ENCODE measurements at regions of chr18 and their contacts with region 1.

Region 1: GRCh38 chr18:21955757-21956652 is 213.4 kb upstream of the GATA6 start:
- DNase-seq: peak; percentile 82
- H3K4me3 Mint-ChIP-seq: no peak overlapping the region
- H3K27ac Mint-ChIP-seq: no peak overlapping the region
- H3K4me1 Mint-ChIP-seq: no peaks in the 10 kb centered on the region
- H3K27me3 Mint-ChIP-seq: peaks cover 23% of the 10 kb centered on the region

Region 2: DNA sequence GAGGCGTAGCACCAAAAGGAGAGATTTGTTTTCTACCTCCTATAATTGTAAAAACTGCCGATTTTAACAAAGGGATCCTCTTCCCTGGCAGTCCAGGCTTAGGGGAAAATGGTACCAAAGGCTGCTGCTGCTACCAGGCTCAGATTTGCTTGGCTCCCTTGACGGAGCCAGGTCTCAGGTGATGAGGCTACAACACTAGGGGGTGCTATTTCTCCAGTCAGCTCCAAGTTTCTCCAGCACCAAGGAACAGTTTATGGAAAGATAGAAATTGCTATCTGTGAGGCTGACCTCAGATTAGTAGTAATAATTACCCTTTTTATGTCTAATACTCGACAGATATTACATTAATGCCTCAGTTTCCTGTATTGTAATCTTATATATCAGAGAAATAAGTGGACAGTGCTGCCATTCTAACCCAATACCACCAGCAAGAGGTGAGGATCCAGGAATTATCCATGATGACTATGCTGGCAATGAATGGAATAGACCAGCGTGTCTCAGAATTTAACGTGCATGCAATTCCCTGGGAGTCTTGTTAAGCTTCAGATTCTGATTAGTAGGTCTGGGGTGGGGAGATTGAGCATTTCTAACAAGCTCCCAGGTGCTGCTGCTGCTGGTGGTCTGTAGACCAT is 466.8 kb before region 1 on chr18:
- CTCF ChIA-PET with region 1: interaction called, 10 read pairs
- POLR2A ChIA-PET with region 1: no interaction called
- intact Hi-C with region 1: loop called (anchors 2 kb)
- DNase-seq: peak; percentile 41
- H3K4me3 Mint-ChIP-seq: no peak overlapping the region
- H3K27ac Mint-ChIP-seq: no peak overlapping the region
- H3K4me1 Mint-ChIP-seq: no peaks in the 10 kb centered on the region
- H3K27me3 Mint-ChIP-seq: peaks cover 2% of the 10 kb centered on the region

Region 3: GRCh38 chr18:21897811-21898210 is 58.2 kb before region 1 on chr18:
- CTCF ChIA-PET with region 1: interaction called, 5 read pairs
- POLR2A ChIA-PET with region 1: no interaction called
- intact Hi-C with region 1: loop called (anchors 1 kb)
- DNase-seq: peak; percentile 19
- H3K4me3 Mint-ChIP-seq: no peak overlapping the region
- H3K27ac Mint-ChIP-seq: no peak overlapping the region
- H3K4me1 Mint-ChIP-seq: peaks cover 3% of the 10 kb centered on the region
- H3K27me3 Mint-ChIP-seq: peaks cover 14% of the 10 kb centered on the region

Measured in activated CD4-positive, alpha-beta memory T cell treated with anti-CD3 and anti-CD28 coated beads for 36 hours (primary cell).